ENCODE measurements at regions of chr2 and their contacts with region 1.

Region 1: GRCh38 chr2:9003616-9004337 is at the start of gene MBOAT2:
- DNase-seq: peak; percentile 84
- H3K4me3 Mint-ChIP-seq: peak within 1 kb of the TSS; percentile 83
- H3K27ac Mint-ChIP-seq: peak within 1 kb of the TSS; percentile 78
- H3K4me1 Mint-ChIP-seq: peaks cover 35% of the 10 kb centered on the region
- H3K27me3 Mint-ChIP-seq: no peaks in the 10 kb centered on the region
- CTCF ChIP-seq: no peak
- total RNA-seq, gene MBOAT2: 30.1 and 34.7 TPM in 2 replicates

Region 2: GRCh38 chr2:8986327-8986976 is 17.3 kb before region 1 on chr2:
- CTCF ChIA-PET with region 1: no interaction called
- POLR2A ChIA-PET with region 1: interaction called, 10 read pairs
- intact Hi-C with region 1: no loop called
- DNase-seq: no peak
- H3K4me3 Mint-ChIP-seq: no peak overlapping the region
- H3K27ac Mint-ChIP-seq: peak overlapping the region; percentile 8
- H3K4me1 Mint-ChIP-seq: peaks cover 31% of the 10 kb centered on the region
- H3K27me3 Mint-ChIP-seq: no peaks in the 10 kb centered on the region
- CTCF ChIP-seq: no peak

Region 3: GRCh38 chr2:9017411-9017810 is 13.6 kb after region 1 on chr2:
- CTCF ChIA-PET with region 1: no interaction called
- POLR2A ChIA-PET with region 1: interaction called, 10 read pairs
- intact Hi-C with region 1: no loop called
- DNase-seq: no peak
- H3K4me3 Mint-ChIP-seq: no peak overlapping the region
- H3K27ac Mint-ChIP-seq: no peak overlapping the region
- H3K4me1 Mint-ChIP-seq: no peaks in the 10 kb centered on the region
- H3K27me3 Mint-ChIP-seq: no peaks in the 10 kb centered on the region
- CTCF ChIP-seq: no peak

Region 4: GRCh38 chr2:9071032-9071431 is 67.3 kb after region 1 on chr2:
- CTCF ChIA-PET with region 1: no interaction called
- POLR2A ChIA-PET with region 1: interaction called, 14 read pairs
- intact Hi-C with region 1: no loop called
- DNase-seq: peak; percentile 97
- H3K4me3 Mint-ChIP-seq: peak overlapping the region; percentile 29
- H3K27ac Mint-ChIP-seq: peak overlapping the region; percentile 87
- H3K4me1 Mint-ChIP-seq: peaks cover 22% of the 10 kb centered on the region
- H3K27me3 Mint-ChIP-seq: no peaks in the 10 kb centered on the region
- CTCF ChIP-seq: no peak

Region 5: GRCh38 chr2:9565436-9566153 is 561.8 kb after region 1 on chr2:
- CTCF ChIA-PET with region 1: no interaction called
- POLR2A ChIA-PET with region 1: no interaction called
- intact Hi-C with region 1: no loop called
- DNase-seq: peak; percentile 94
- H3K4me3 Mint-ChIP-seq: peak overlapping the region; percentile 67
- H3K27ac Mint-ChIP-seq: peak overlapping the region; percentile 97
- H3K4me1 Mint-ChIP-seq: peaks cover 9% of the 10 kb centered on the region
- H3K27me3 Mint-ChIP-seq: no peaks in the 10 kb centered on the region
- CTCF ChIP-seq: no peak

Measured in MCF 10A (cell line).